ENCODE measurements at regions of chr6 and their contacts with region 1.

Region 1: DNA sequence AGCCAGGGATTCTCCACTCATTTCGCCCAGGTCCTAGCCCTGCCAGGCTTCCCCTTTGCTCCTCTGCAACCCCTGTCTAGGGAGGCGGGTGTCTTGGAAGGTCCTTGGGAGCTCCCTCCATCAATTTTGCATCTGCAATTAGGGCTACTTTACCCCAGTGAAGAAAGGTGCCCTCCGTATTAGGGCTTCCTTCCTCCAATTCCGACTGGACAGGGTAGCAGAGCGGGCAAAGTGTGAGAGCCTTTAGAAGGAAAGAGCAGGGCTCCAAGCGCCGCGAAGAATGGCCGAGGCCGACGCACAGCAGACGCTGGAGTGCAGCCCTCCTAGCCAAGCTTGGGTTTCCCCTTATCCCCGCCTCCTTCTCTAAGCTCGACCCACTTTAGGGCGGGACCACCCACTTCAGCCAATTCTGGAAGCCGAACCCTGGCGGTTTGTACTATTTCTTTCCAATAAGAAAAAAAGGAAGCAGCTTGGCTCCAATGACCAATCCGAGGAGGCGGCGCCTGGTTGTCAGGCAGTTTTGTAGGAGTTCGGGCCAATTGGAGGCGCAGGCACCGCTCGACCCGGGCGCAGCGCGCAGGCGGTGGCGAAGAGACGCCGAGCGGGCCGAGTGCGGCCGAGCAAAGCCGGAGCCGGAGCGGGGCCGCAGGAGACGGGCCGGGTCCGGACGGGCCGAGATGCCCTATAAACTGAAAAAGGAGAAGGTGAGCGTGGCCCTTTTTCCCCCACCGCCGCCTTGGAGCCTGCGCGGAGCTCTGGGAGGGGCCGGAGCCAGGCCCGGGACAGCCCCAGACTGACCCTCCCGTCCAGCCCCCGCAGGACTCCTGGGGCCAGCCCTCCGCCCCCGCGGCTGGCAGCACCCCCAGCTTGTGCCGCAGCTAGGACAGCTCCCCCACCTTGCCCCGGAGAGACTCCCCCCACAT is at the start of gene PPP2R5D:
- DNase-seq: peak; percentile 91 to 100 (median 99)

Region 2: DNA sequence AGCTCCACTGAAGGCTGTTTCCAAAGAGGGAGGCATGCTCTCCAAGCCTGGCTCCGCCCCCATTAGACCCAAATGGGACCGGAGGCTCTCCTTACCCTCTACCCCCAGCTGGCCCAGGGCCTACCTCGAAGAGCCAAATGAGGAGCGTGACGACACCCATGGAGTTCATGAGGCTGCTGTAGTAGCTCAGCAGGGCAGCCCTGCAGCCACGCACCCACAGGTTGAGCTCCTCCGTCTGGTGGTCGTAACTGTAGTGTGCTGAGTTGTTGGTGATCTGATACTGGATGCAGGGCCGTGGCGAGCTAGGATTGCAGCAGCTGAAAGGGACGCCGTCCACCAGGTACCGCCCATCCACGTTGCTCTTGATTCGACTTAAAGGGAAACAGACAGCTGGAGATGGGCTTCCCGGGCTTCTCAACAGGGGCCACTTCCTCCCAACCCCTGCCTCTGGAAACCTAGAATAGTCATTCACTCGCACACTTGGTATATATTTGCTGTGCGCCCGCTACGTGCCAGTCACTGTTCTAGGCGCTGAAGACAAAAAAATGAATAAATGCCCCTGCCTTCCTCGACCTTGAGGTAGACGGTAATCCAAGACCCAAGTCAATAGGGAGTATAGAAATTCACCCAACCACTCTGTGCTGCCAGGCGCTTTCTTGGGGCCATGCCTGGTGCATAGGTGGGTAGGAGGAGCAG is 279.9 kb before region 1 on chr6:
- intact Hi-C with region 1: no loop called
- DNase-seq: no peak

Region 3: DNA sequence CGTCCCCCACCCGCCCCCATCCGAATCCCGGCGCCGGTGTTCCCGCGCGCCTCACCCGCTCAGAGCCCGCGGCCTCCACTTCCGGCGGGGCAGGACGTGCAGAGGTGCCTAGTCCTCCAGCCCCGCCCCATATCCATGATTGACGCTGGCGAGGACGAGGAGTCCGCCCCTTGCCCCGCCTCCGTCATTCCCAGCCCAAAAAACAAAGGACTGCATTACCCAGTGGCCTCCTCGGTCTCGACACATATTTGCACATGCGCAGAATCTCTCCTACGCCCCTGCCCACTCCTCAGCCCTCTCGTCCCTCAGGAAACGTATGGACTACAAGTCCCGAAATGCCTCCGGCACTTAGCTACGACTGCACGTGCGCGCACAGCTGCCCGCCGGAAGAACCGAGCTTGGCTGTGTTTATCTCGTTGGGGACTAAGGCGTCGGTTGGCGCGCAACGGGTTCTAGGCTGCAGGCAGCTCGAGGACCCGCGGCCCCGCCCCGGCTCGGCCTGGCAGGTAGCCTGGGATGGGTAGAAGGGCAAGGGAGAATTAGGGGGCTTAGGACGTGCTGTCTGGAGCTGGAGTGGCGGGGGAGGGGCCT is 29.7 kb after region 1 on chr6 and contains the starts of genes KLHDC3 and MEA1:
- intact Hi-C with region 1: loop called (anchors 2 kb)
- DNase-seq: peak; percentile 98 to 100 (median 100)